Activated CD4-positive, alpha-beta T cell treated with anti-CD3 and anti-CD28 coated beads for 36 hours (primary cell): ENCODE measurements at regions of chr7 and their contacts with region 1.

Region 1: DNA sequence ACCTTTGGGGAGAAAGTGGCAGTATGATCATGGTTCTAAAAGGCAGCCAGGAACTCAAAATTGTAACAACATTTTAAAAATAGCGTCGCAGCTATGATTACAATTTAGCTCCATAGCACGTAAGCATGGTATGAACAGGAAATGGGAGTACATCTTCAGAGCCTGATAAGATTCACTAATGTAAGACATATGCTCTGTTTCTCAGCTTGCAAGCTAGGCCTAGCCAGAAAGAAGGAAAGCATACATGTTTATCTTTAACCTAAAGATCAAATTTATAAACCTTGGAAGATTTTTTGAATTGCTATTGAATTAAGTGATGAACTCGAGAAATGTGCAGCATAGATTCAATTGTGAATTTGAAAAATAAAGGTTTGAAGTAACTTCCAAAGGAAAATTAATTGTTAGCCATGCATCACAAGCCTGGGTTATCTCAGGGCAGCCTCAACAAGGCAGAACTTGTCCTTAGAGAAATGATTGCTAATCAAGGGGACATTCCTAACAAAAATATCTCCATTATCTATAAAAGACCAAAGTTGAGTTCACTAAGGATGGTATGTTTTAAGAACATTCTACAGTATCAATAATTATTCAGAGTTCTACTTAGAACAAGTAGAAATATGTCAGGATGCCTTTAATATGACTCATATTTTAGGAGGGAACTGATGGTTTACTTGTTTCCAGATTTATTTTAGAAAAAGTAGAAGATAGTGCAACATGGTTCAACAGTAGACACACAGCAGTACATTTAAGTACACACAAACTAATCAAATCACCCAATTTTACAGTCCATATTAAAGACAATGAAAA is 38.8 kb upstream of the SEPTIN7 start:
- DNase-seq: no peak
- ATAC-seq: no peak
- H3K4me3 Mint-ChIP-seq: no peak overlapping the region
- H3K27ac Mint-ChIP-seq: no peak overlapping the region
- H3K4me1 Mint-ChIP-seq: peaks cover 3% of the 10 kb centered on the region
- H3K27me3 Mint-ChIP-seq: peaks cover 3% of the 10 kb centered on the region

Region 2: DNA sequence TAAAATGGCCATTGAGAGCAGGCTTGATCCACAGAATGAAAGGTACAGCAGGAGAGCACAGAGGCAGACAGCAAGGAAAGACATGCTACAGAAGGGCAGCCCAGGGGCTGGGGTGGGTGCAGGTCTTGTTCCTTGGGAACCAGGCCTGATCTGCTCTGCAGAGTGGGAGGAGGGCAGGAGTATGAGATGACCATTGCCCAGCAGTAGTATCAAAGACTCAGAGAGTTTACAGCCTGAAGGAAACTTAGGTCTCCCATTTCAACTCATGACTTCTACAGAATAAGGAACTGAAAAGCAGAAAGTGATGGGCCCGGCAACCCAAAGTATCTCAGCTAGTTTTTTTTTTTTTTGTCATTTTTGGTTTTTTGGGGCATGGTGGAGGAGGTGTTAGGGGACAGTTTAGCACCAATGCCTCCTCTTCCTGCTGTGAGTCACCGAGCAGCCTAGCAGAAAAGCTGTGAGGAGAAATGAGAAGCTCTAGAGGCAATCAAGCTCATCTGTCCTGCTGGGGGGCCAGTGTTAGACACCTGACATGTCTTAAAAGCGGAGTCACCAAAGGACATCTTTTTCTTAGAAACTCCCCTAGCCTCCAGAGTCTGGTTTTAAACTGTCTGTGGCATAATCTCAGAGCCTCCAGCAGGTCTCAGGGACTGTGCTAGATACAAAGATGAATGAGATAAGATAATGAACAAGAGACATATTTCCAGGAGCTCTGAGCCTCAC is 32.9 kb before region 1 on chr7:
- CTCF ChIA-PET with region 1: interaction called, 4 read pairs
- POLR2A ChIA-PET with region 1: no interaction called
- intact Hi-C with region 1: loop called in 1 of 2 experiments (anchors 2 kb)
- DNase-seq: peak; percentile 60
- ATAC-seq: peak; percentile 72
- H3K4me3 Mint-ChIP-seq: no peak overlapping the region
- H3K27ac Mint-ChIP-seq: no peak overlapping the region
- H3K4me1 Mint-ChIP-seq: peaks cover 57% of the 10 kb centered on the region
- H3K27me3 Mint-ChIP-seq: no peaks in the 10 kb centered on the region